Activated CD8-positive, alpha-beta T cell treated with anti-CD3 and anti-CD28 coated beads, Interleukin-2, amount 10 ng/mL, durations not matched to agents 7 days and 5 days (primary cell): ENCODE measurements at regions of chr2 and their contacts with region 1.

Region 1: GRCh38 chr2:11129598-11130449 is 25.4 kb upstream of the SLC66A3 start:
- DNase-seq: peak; percentile 81
- ATAC-seq: peak; percentile 86
- H3K4me3 Mint-ChIP-seq: peak overlapping the region; percentile 67
- H3K27ac Mint-ChIP-seq: no peak overlapping the region
- H3K4me1 Mint-ChIP-seq: peaks cover 36% of the 10 kb centered on the region
- H3K27me3 Mint-ChIP-seq: peaks cover 12% of the 10 kb centered on the region

Region 2: GRCh38 chr2:11051280-11051679 is 78.5 kb before region 1 on chr2:
- CTCF ChIA-PET with region 1: no interaction called
- POLR2A ChIA-PET with region 1: no interaction called
- DNase-seq: no peak
- ATAC-seq: no peak
- H3K4me3 Mint-ChIP-seq: no peak overlapping the region
- H3K27ac Mint-ChIP-seq: no peak overlapping the region
- H3K4me1 Mint-ChIP-seq: no peaks in the 10 kb centered on the region
- H3K27me3 Mint-ChIP-seq: peaks cover 4% of the 10 kb centered on the region

Region 3: GRCh38 chr2:11145350-11145749 is 15.5 kb after region 1 on chr2:
- CTCF ChIA-PET with region 1: interaction called, 13 read pairs
- POLR2A ChIA-PET with region 1: interaction called, 3 read pairs
- DNase-seq: no peak
- ATAC-seq: no peak
- H3K4me3 Mint-ChIP-seq: no peak overlapping the region
- H3K27ac Mint-ChIP-seq: no peak overlapping the region
- H3K4me1 Mint-ChIP-seq: no peaks in the 10 kb centered on the region
- H3K27me3 Mint-ChIP-seq: peaks cover 15% of the 10 kb centered on the region

Region 4: GRCh38 chr2:11411768-11412448 is 282.1 kb after region 1 on chr2:
- CTCF ChIA-PET with region 1: interaction called, 22 read pairs
- POLR2A ChIA-PET with region 1: no interaction called
- DNase-seq: no peak
- ATAC-seq: no peak
- H3K4me3 Mint-ChIP-seq: no peak overlapping the region
- H3K27ac Mint-ChIP-seq: no peak overlapping the region
- H3K4me1 Mint-ChIP-seq: no peaks in the 10 kb centered on the region
- H3K27me3 Mint-ChIP-seq: peaks cover 15% of the 10 kb centered on the region

Region 5: GRCh38 chr2:11465497-11466406 is 335.9 kb after region 1 on chr2 and contains the start of gene E2F6:
- CTCF ChIA-PET with region 1: interaction called, 12 read pairs
- POLR2A ChIA-PET with region 1: no interaction called
- DNase-seq: peak; percentile 87
- ATAC-seq: peak; percentile 89
- H3K4me3 Mint-ChIP-seq: peak within 1 kb of the TSS; percentile 94
- H3K27ac Mint-ChIP-seq: peak within 1 kb of the TSS; percentile 94
- H3K4me1 Mint-ChIP-seq: peaks cover 25% of the 10 kb centered on the region
- H3K27me3 Mint-ChIP-seq: no peaks in the 10 kb centered on the region
- total RNA-seq, gene E2F6: 8.2 to 8.4 TPM

Region 6: DNA sequence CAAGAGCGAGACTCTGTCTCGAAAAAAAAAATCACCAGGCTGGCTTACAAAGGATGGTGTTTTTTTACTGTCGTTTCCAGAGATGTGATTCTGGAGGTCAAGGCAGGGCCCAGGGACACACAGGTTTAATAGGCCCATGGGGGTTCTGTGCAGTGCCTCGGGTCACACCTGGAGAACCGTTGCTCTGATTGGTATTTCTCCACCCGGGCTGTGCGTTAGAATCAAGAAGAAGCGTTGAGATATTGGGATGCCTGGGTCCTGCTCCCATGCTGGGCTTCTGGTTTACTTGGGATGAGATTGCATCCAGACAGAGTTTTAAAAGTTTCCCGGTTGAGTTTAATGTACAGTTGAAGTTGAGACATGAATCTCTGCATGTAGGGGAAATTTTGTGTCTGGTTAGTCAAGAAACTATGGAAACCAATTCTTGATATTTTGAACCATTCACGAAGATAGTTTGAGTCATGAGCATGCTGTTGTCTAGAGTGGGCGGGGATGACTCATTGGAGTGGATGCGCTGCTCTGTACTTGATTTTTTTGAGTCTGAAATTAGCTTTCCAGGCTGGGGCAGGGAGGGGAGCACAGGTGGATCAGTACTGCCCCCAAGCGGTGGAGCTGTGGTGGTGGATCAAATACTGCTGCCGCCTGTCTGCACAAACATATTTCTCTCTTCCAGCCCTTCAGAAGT is 454.2 kb after region 1 on chr2:
- CTCF ChIA-PET with region 1: interaction called, 98 read pairs
- POLR2A ChIA-PET with region 1: interaction called, 3 read pairs
- DNase-seq: peak; percentile 75
- ATAC-seq: peak; percentile 78
- H3K4me3 Mint-ChIP-seq: no peak overlapping the region
- H3K27ac Mint-ChIP-seq: no peak overlapping the region
- H3K4me1 Mint-ChIP-seq: no peaks in the 10 kb centered on the region
- H3K27me3 Mint-ChIP-seq: peaks cover 2% of the 10 kb centered on the region